ENCODE measurements at regions of chr7 and their contacts with region 1.

Region 1: DNA sequence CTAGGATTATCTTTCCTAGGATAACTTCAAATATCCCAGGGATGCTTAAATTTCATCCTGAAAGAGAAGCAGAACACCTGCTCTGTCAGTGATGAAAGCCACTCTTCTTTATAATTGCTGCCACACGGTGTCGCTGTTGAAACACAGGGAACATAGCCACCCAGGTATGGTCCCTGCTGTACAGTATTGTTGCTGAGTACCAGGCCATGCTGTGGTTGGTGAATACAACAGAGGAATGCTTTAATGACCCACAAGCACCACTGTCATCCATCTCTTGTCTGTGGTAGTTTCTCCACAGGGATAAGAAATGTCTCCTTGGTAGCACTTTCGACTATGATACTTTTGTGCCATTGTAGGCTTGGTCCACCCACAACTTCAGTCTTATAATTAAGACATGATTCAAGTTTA is 70.6 kb upstream of the STARD3NL start:
- DNase-seq: peak; percentile 55
- ATAC-seq: peak; percentile 95
- H3K4me3 ChIP-seq: no peak overlapping the region
- H3K27ac ChIP-seq: no peak overlapping the region
- H3K4me1 ChIP-seq: no peaks in the 10 kb centered on the region
- H3K27me3 ChIP-seq: no peaks in the 10 kb centered on the region
- CTCF ChIP-seq: peak; percentile 86
- EP300 ChIP-seq: no peak
- POLR2A ChIP-seq: no peak
- RAD21 ChIP-seq: peak; percentile 60

Region 2: GRCh38 chr7:38186593-38187314 is 79.3 kb after region 1 on chr7:
- CTCF ChIA-PET with region 1: no interaction called
- POLR2A ChIA-PET with region 1: no interaction called
- in situ Hi-C with region 1: no loop called
- intact Hi-C with region 1: no loop called
- DNase-seq: no peak
- ATAC-seq: no peak
- H3K4me3 ChIP-seq: no peak overlapping the region
- H3K27ac ChIP-seq: no peak overlapping the region
- H3K4me1 ChIP-seq: no peaks in the 10 kb centered on the region
- H3K27me3 ChIP-seq: no peaks in the 10 kb centered on the region
- CTCF ChIP-seq: no peak
- EP300 ChIP-seq: no peak
- POLR2A ChIP-seq: no peak
- RAD21 ChIP-seq: no peak

Region 3: GRCh38 chr7:38222481-38223096 is 115.1 kb after region 1 on chr7:
- CTCF ChIA-PET with region 1: interaction called, 44 read pairs
- POLR2A ChIA-PET with region 1: no interaction called
- in situ Hi-C with region 1: loop called (anchors 5 kb)
- intact Hi-C with region 1: loop called (anchors 1 kb)
- DNase-seq: peak; percentile 51
- ATAC-seq: peak; percentile 81
- H3K4me3 ChIP-seq: no peak overlapping the region
- H3K27ac ChIP-seq: no peak overlapping the region
- H3K4me1 ChIP-seq: no peaks in the 10 kb centered on the region
- H3K27me3 ChIP-seq: no peaks in the 10 kb centered on the region
- CTCF ChIP-seq: peak; percentile 81
- EP300 ChIP-seq: no peak
- POLR2A ChIP-seq: no peak
- RAD21 ChIP-seq: peak; percentile 54; the same call in 1 of the 2 replicates

Region 4: DNA sequence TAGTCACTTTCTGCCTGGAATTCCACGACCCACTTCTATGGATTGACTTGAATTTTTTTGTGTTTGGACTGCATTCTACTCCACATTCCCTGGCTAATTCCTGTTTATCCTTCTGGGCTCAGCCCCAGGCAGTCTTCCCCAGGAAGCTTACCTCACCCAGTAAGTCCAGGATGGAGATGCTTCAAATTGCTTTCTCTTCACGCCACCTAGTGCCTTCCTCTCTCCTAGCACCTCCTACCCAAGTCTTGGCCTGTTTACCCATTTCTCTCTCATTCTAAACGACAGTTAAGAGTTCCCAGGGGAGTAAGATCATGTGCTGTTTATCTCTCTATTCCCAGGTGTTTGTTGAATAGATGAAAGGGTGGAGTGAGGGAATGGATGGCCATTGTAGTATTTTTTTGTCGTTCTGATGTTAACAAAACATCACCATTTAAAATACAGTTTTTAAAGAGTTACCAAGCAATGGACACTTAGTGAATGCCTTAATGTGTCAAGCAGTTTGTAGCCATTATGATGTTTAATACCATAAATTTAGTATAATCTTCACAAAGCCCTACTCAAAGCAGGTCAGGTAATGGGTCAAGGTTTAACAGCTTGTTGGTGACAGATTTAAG is 211.4 kb after region 1 on chr7:
- CTCF ChIA-PET with region 1: interaction called, 5 read pairs
- POLR2A ChIA-PET with region 1: no interaction called
- in situ Hi-C with region 1: loop called (anchors 25 kb)
- intact Hi-C with region 1: loop called (anchors 1 kb)
- DNase-seq: peak; percentile 23
- ATAC-seq: peak; percentile 89
- H3K4me3 ChIP-seq: no peak overlapping the region
- H3K27ac ChIP-seq: no peak overlapping the region
- H3K4me1 ChIP-seq: no peaks in the 10 kb centered on the region
- H3K27me3 ChIP-seq: peaks cover 0 to 12% of the 10 kb centered on the region in 2 experiments; a peak in 2 of 5 replicates
- CTCF ChIP-seq: peak; percentile 57
- EP300 ChIP-seq: no peak
- POLR2A ChIP-seq: no peak
- RAD21 ChIP-seq: no peak

Measured in HepG2 (cell line).